MCF 10A (cell line): ENCODE measurements at regions of chr14 and their contacts with region 1.

Region 1: DNA sequence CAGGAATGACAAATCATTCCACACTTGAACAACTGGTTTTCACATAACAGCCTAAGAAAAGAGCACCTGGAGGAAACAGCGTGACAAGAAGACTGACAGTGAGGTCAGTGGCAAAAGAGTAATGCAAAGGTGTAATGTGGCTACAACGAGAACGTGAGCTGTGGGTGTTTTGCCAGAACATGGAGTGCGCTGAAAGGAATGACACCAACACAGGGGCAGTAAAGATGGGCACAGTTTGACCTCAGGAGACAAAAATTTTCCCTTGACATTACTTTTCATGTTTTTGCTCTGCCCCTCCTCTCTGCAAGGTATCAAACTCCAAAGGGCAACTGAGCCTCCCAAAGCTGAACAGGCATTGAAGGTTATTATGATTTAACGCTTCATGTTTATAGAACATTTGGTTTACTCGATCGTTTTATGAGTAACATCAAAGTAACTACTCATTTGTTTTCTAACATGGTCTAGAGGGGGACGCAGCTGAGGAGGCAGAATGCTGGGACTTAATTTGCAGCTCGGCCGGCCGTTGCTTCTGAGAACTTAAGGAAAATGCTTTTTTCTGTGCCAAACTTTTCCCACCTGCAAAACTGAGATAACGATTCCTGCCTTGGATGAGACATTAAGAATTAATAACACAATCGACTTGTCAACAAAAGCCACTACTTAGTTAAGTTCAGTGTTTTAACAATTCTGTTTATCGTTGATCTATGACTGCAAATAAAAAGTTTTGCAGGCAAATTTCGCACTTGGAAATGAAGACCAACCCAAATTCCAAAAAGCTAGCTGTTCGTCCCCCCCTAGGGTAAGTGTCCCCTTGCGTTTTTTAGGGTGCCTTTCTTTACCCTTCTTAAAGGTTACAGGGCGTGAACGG is 954 bp downstream of the HAUS4 start:
- DNase-seq: peak; percentile 3
- H3K4me3 Mint-ChIP-seq: peak overlapping the region; percentile 90
- H3K27ac Mint-ChIP-seq: peak overlapping the region; percentile 66
- H3K4me1 Mint-ChIP-seq: peaks cover 9% of the 10 kb centered on the region
- H3K27me3 Mint-ChIP-seq: no peaks in the 10 kb centered on the region
- CTCF ChIP-seq: no peak

Region 2: DNA sequence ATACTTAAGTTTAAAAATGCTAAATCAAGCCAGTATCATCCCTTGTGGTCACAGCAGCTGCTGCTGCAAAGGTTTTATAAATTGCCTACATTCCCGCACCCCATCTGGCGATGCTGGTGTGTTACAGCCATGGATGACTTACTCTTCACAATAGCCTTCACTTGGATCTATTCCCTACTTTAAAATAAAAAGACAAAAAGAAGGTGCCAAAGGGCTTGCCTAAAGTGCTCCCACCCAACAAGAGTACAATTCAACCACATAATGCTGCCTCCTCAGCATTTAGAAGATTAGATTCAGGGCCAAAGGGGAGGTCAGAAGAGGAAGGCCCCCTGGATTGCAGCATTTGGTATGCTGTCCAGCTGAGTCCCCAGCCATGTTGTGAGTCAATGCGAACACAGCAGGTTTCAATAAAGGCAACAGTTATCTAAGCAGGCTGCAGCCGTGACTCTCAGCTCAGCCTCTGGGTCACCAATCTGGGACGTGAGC is 543.0 kb before region 1 on chr14:
- CTCF ChIA-PET with region 1: no interaction called
- POLR2A ChIA-PET with region 1: no interaction called
- intact Hi-C with region 1: no loop called
- DNase-seq: no peak
- H3K4me3 Mint-ChIP-seq: no peak overlapping the region
- H3K27ac Mint-ChIP-seq: no peak overlapping the region
- H3K4me1 Mint-ChIP-seq: no peaks in the 10 kb centered on the region
- H3K27me3 Mint-ChIP-seq: peaks cover 18% of the 10 kb centered on the region
- CTCF ChIP-seq: no peak

Region 3: DNA sequence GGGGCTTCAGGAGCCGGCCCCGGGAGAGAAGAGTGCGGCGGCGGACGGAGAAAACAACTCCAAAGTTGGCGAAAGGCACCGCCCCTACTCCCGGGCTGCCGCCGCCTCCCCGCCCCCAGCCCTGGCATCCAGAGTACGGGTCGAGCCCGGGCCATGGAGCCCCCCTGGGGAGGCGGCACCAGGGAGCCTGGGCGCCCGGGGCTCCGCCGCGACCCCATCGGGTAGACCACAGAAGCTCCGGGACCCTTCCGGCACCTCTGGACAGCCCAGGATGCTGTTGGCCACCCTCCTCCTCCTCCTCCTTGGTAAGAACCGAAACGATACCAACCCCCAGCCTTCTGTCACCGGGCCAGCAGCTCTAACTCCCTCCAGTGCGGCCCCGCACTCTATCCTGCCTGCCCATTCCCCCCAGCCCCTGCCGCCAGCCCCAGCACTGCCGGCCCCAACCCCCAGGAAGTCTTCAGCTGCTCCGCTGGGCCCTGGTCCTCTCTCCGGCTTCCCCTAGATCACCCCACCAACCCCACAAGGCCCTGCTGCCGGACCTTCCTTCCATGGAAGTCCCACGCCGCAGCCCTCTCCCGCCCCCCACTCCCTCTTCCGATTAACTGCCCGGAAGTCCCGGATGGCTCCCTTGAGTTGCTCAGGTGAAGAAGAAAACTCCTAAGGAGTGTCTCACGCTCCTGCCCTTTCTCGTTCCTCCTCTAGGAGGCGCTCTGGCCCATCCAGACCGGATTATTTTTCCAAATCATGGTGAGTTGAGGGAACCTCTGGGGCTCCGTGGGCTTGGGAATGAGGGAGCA is 83.7 kb before region 1 on chr14:
- CTCF ChIA-PET with region 1: interaction called, 4 read pairs
- POLR2A ChIA-PET with region 1: interaction called, 15 read pairs
- intact Hi-C with region 1: no loop called
- DNase-seq: peak; percentile 90
- H3K4me3 Mint-ChIP-seq: peak overlapping the region; percentile 79
- H3K27ac Mint-ChIP-seq: peak overlapping the region; percentile 91
- H3K4me1 Mint-ChIP-seq: peaks cover 20% of the 10 kb centered on the region
- H3K27me3 Mint-ChIP-seq: no peaks in the 10 kb centered on the region
- CTCF ChIP-seq: peak; percentile 81

Region 4: DNA sequence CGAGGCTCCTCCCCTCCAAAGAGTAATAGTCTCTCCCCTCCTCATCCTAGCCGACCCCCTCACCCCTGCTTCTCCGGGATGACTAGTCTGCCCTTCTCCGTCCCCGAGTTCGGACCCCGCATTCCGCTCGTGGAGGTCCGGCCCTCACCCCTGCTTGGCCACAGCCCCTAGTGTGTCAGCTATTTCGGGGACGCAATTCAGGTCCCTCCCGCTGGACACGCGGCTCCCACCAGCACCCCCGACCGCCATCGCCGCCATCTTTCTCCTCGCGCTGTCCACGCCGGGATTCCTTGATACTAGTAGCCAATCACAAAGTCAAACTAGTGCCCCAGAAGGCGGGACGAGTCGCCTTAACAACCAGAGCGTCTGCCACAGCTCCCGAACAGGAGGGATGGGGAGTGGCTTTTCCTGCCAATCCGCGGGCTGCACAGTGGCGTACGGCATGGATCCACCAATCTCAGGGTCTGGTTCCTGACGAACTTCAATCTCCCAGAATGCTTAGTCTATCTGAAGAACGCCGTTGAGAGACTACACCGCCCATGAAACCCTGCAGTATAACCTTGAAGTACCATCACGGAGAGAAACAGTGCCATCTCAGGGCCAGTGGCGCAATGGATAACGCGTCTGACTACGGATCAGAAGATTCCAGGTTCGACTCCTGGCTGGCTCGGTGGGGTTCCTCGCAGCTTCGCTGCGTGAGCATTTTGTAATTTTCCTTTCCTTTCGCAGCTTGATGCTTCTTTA is 26.7 kb before region 1 on chr14 and contains the start of gene PRMT5:
- CTCF ChIA-PET with region 1: interaction called, 24 read pairs
- POLR2A ChIA-PET with region 1: interaction called, 79 read pairs
- intact Hi-C with region 1: loop called (anchors 1 kb)
- DNase-seq: peak; percentile 99
- H3K4me3 Mint-ChIP-seq: no peak within 1 kb of the TSS
- H3K27ac Mint-ChIP-seq: no peak within 1 kb of the TSS
- H3K4me1 Mint-ChIP-seq: peaks cover 15% of the 10 kb centered on the region
- H3K27me3 Mint-ChIP-seq: no peaks in the 10 kb centered on the region
- CTCF ChIP-seq: no peak
- total RNA-seq, gene PRMT5: 175 and 201 TPM in 2 replicates

Region 5: GRCh38 chr14:22966783-22967269 is 10.9 kb after region 1 on chr14:
- CTCF ChIA-PET with region 1: interaction called, 37 read pairs
- POLR2A ChIA-PET with region 1: interaction called, 45 read pairs
- intact Hi-C with region 1: no loop called
- DNase-seq: no peak
- H3K4me3 Mint-ChIP-seq: no peak overlapping the region
- H3K27ac Mint-ChIP-seq: no peak overlapping the region
- H3K4me1 Mint-ChIP-seq: peaks cover under 1% of the 10 kb centered on the region
- H3K27me3 Mint-ChIP-seq: no peaks in the 10 kb centered on the region
- CTCF ChIP-seq: no peak

Region 6: GRCh38 chr14:22980672-22981089 is 24.7 kb after region 1 on chr14:
- CTCF ChIA-PET with region 1: interaction called, 331 read pairs
- POLR2A ChIA-PET with region 1: interaction called, 38 read pairs
- intact Hi-C with region 1: no loop called
- DNase-seq: peak; percentile 61
- H3K4me3 Mint-ChIP-seq: no peak overlapping the region
- H3K27ac Mint-ChIP-seq: peak overlapping the region; percentile 16
- H3K4me1 Mint-ChIP-seq: peaks cover 44% of the 10 kb centered on the region
- H3K27me3 Mint-ChIP-seq: no peaks in the 10 kb centered on the region
- CTCF ChIP-seq: no peak